ENCODE measurements at regions of chr18 and their contacts with region 1.

Region 1: DNA sequence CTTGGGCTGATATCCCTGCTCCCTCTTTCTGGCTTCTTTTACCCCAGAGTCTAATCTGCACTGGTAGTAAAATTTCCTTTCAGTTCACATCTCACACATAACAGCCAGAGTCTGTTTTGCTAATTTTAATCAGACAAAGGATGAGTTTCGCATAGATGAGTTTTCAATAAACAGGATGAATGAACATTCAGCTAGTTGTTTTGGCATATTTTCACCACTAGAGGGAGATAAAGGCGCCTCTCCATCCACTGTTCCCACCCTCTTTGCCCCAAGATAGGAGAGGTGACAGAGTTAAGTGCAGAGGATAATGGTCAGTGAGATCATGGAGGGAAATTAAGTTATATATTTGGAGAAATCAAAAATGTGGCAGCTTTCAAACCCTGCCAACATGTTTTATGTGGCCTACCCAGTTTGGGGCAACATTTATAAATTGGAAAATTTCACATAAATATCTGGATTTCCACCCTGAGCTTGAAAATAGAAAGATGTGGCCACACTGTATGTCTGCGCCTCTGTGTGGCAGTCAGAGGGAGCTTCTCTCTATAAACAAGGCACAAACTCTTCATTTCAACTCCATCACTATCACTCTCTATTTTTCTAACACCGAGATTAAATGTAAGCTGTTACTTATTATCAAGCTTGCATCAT is 48.5 kb upstream of the DTNA start:
- DNase-seq: no peak
- ATAC-seq: peak; percentile 54 to 72 (median 68)
- H3K4me3 ChIP-seq: no peak overlapping the region
- H3K27ac ChIP-seq: no peak overlapping the region
- H3K4me1 ChIP-seq: peaks cover 42% of the 10 kb centered on the region
- H3K27me3 ChIP-seq: no peaks in the 10 kb centered on the region
- CTCF ChIP-seq: peak; percentile 77

Region 2: GRCh38 chr18:34385311-34385710 is 276.3 kb before region 1 on chr18:
- intact Hi-C with region 1: no loop called
- DNase-seq: no peak
- ATAC-seq: no peak
- H3K4me3 ChIP-seq: no peak overlapping the region
- H3K27ac ChIP-seq: no peak overlapping the region
- H3K4me1 ChIP-seq: no peaks in the 10 kb centered on the region
- H3K27me3 ChIP-seq: no peaks in the 10 kb centered on the region
- CTCF ChIP-seq: no peak

Region 3: DNA sequence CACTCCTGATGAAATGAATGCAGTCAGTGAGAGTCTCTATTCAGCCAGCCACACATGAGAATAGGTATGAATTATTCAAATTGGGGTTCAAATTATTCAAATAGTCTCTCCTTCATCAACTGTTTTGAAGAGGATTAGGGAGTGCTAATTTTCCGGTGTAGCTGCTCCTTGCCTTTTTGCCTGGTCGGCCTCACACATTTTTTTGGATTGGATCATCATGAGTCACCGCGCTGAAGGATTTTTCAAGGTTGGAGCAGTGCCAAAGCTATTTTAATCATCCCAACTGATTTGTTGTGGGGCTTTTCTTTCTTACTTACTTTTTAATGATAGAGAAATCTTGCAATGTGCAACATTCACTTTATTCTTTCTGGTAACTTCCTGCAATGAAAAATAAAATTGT is 46.1 kb after region 1 on chr18:
- intact Hi-C with region 1: loop called in 1 of 2 experiments (anchors 5 kb)
- DNase-seq: peak in 1 of 2 donors; percentile 54
- ATAC-seq: peak; percentile 53 to 84 (median 64)
- H3K4me3 ChIP-seq: peak overlapping the region; percentile 32
- H3K27ac ChIP-seq: peak overlapping the region; percentile 73
- H3K4me1 ChIP-seq: peaks cover 50% of the 10 kb centered on the region
- H3K27me3 ChIP-seq: no peaks in the 10 kb centered on the region
- CTCF ChIP-seq: no peak